ENCODE measurements at regions of chr12 and their contacts with region 1.

Region 1: DNA sequence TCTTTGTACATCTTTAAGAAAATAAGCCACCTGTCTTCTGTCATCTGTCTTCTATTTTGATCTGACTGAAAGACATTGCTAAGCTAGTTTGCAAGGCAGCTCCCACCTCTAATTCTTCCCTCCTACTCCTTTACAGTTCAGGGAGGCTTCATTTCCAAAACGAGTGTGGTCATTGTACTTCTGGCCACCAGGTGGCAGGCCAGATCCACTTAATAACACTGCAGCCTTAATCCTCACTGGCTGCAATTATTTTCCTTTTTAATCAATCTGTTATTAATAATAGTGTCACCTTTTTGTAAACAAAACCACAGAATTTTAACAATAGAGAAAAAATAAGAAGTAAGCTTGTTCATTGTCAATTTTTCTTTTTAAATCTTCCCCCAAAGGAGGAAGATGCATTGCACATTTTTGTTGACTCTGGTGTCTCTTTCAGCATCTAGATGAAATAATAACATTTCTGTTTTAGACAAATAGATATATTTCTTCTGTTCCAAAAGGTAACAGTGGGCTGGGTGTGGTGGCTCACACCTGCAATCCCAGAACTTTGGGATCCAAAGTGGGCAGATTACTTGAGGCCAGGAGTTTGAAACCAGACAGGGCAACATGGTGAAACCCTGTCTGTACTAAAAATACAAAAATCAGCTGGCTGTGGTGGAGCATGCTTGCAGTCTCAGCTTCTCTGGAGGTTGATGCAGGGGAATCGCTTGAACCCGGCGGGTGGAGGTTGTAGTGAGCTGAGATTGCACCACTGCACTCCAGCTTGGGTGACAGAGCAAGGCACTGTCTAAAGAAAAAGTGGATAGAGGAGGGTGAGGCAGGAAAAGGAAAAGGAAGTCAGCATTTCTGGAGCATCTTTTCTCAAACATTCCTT is 23.3 kb downstream of the GABARAPL1 start:
- DNase-seq: peak in 8 of 9 experiments; percentile 26 to 80 (median 54)
- ATAC-seq: peak; percentile 78
- H3K4me3 ChIP-seq: no peak overlapping the region
- H3K4me3 Mint-ChIP-seq: no peak overlapping the region
- H3K27ac ChIP-seq: peak overlapping the region in 1 of 2 experiments; percentile 56
- H3K27ac Mint-ChIP-seq: peak overlapping the region; percentile 73
- H3K4me1 ChIP-seq: peaks cover 6% of the 10 kb centered on the region
- H3K4me1 Mint-ChIP-seq: peaks cover 18% of the 10 kb centered on the region
- H3K27me3 ChIP-seq: no peaks in the 10 kb centered on the region
- H3K27me3 Mint-ChIP-seq: no peaks in the 10 kb centered on the region
- CTCF ChIP-seq: peak; percentile 90

Region 2: GRCh38 chr12:10182354-10183061 is 53.5 kb before region 1 on chr12:
- CTCF ChIA-PET with region 1: no interaction called
- POLR2A ChIA-PET with region 1: no interaction called
- intact Hi-C with region 1: no loop called
- DNase-seq: peak in 1 of 9 experiments; percentile 26
- ATAC-seq: no peak
- H3K4me3 ChIP-seq: no peak overlapping the region
- H3K4me3 Mint-ChIP-seq: no peak overlapping the region
- H3K27ac ChIP-seq: no peak overlapping the region
- H3K27ac Mint-ChIP-seq: no peak overlapping the region
- H3K4me1 ChIP-seq: no peaks in the 10 kb centered on the region
- H3K4me1 Mint-ChIP-seq: no peaks in the 10 kb centered on the region
- H3K27me3 ChIP-seq: peaks cover 3 to 5% of the 10 kb centered on the region in 2 experiments
- H3K27me3 Mint-ChIP-seq: peaks cover 32% of the 10 kb centered on the region
- CTCF ChIP-seq: no peak

Region 3: GRCh38 chr12:10304161-10304574 is 68.2 kb after region 1 on chr12:
- CTCF ChIA-PET with region 1: interaction called, 5 read pairs
- POLR2A ChIA-PET with region 1: no interaction called
- intact Hi-C with region 1: loop called (anchors 5 kb)
- DNase-seq: peak in 4 of 9 experiments; percentile 10 to 83 (median 47)
- ATAC-seq: peak; percentile 52
- H3K4me3 ChIP-seq: no peak overlapping the region
- H3K4me3 Mint-ChIP-seq: no peak overlapping the region
- H3K27ac ChIP-seq: peak overlapping the region in 1 of 2 experiments; percentile 87
- H3K27ac Mint-ChIP-seq: peak overlapping the region; percentile 24
- H3K4me1 ChIP-seq: peaks cover 9% of the 10 kb centered on the region
- H3K4me1 Mint-ChIP-seq: peaks cover 42% of the 10 kb centered on the region
- H3K27me3 ChIP-seq: no peaks in the 10 kb centered on the region
- H3K27me3 Mint-ChIP-seq: no peaks in the 10 kb centered on the region
- CTCF ChIP-seq: no peak

Region 4: GRCh38 chr12:10331642-10332239 is 95.7 kb after region 1 on chr12:
- CTCF ChIA-PET with region 1: interaction called, 9 read pairs
- POLR2A ChIA-PET with region 1: no interaction called
- intact Hi-C with region 1: loop called in 1 of 2 experiments (anchors 2 kb)
- DNase-seq: peak in 3 of 9 experiments; percentile 8 to 77 (median 63)
- ATAC-seq: no peak
- H3K4me3 ChIP-seq: no peak overlapping the region
- H3K4me3 Mint-ChIP-seq: peak overlapping the region; percentile 26
- H3K27ac ChIP-seq: no peak overlapping the region
- H3K27ac Mint-ChIP-seq: no peak overlapping the region
- H3K4me1 ChIP-seq: peaks cover 6% of the 10 kb centered on the region
- H3K4me1 Mint-ChIP-seq: peaks cover 10% of the 10 kb centered on the region
- H3K27me3 ChIP-seq: no peaks in the 10 kb centered on the region
- H3K27me3 Mint-ChIP-seq: no peaks in the 10 kb centered on the region
- CTCF ChIP-seq: peak; percentile 51

Region 5: GRCh38 chr12:10562306-10562933 is 326.4 kb after region 1 on chr12:
- CTCF ChIA-PET with region 1: interaction called, 20 read pairs
- POLR2A ChIA-PET with region 1: no interaction called
- intact Hi-C with region 1: loop called (anchors 1 kb)
- DNase-seq: peak in 4 of 9 experiments; percentile 29 to 79 (median 62)
- ATAC-seq: no peak
- H3K4me3 ChIP-seq: no peak overlapping the region
- H3K4me3 Mint-ChIP-seq: peak overlapping the region; percentile 11
- H3K27ac ChIP-seq: no peak overlapping the region
- H3K27ac Mint-ChIP-seq: peak overlapping the region; percentile 80
- H3K4me1 ChIP-seq: peaks cover 70% of the 10 kb centered on the region
- H3K4me1 Mint-ChIP-seq: peaks cover 83% of the 10 kb centered on the region
- H3K27me3 ChIP-seq: no peaks in the 10 kb centered on the region
- H3K27me3 Mint-ChIP-seq: no peaks in the 10 kb centered on the region
- CTCF ChIP-seq: peak; percentile 98

Region 6: GRCh38 chr12:10668526-10668925 is 432.5 kb after region 1 on chr12:
- CTCF ChIA-PET with region 1: interaction called, 27 read pairs
- POLR2A ChIA-PET with region 1: no interaction called
- intact Hi-C with region 1: no loop called
- DNase-seq: peak in 2 of 9 experiments; percentile 26 to 51
- ATAC-seq: no peak
- H3K4me3 ChIP-seq: peak overlapping the region; percentile 21 to 34
- H3K4me3 Mint-ChIP-seq: peak overlapping the region; percentile 86
- H3K27ac ChIP-seq: no peak overlapping the region
- H3K27ac Mint-ChIP-seq: peak overlapping the region; percentile 84
- H3K4me1 ChIP-seq: peaks cover 25% of the 10 kb centered on the region
- H3K4me1 Mint-ChIP-seq: peaks cover 40% of the 10 kb centered on the region
- H3K27me3 ChIP-seq: no peaks in the 10 kb centered on the region
- H3K27me3 Mint-ChIP-seq: no peaks in the 10 kb centered on the region
- CTCF ChIP-seq: no peak

Region 7: GRCh38 chr12:10740182-10740581 is 504.2 kb after region 1 on chr12:
- CTCF ChIA-PET with region 1: interaction called, 5 read pairs
- POLR2A ChIA-PET with region 1: no interaction called
- intact Hi-C with region 1: loop called in 1 of 2 experiments (anchors 5 kb)
- DNase-seq: no peak
- ATAC-seq: no peak
- H3K4me3 ChIP-seq: no peak overlapping the region
- H3K4me3 Mint-ChIP-seq: no peak overlapping the region
- H3K27ac ChIP-seq: no peak overlapping the region
- H3K27ac Mint-ChIP-seq: no peak overlapping the region
- H3K4me1 ChIP-seq: no peaks in the 10 kb centered on the region
- H3K4me1 Mint-ChIP-seq: no peaks in the 10 kb centered on the region
- H3K27me3 ChIP-seq: no peaks in the 10 kb centered on the region
- H3K27me3 Mint-ChIP-seq: peaks cover 2% of the 10 kb centered on the region
- CTCF ChIP-seq: no peak

Region 8: DNA sequence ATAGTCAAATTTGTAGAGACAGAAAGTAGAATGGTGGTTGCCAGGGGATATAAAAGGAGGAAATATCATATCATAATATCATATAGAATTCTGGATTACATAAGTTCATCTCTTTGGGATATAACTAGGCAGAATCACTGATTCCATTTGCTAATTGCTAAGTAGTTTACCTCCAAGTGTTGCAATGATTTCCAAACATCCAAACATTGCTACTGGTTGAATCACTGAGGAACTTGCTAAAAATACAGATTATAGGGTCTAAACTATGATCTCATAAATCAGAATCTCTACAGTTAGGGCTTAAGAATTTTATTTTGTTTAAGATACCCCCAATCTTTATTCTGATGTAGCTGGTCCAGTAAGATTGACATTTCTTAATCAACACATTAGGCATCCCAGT is 966.8 kb after region 1 on chr12:
- CTCF ChIA-PET with region 1: interaction called, 4 read pairs
- POLR2A ChIA-PET with region 1: no interaction called
- intact Hi-C with region 1: loop called in 1 of 2 experiments (anchors 10 kb)
- DNase-seq: no peak
- ATAC-seq: no peak
- H3K4me3 ChIP-seq: no peak overlapping the region
- H3K4me3 Mint-ChIP-seq: no peak overlapping the region
- H3K27ac ChIP-seq: no peak overlapping the region
- H3K27ac Mint-ChIP-seq: no peak overlapping the region
- H3K4me1 ChIP-seq: no peaks in the 10 kb centered on the region
- H3K4me1 Mint-ChIP-seq: no peaks in the 10 kb centered on the region
- H3K27me3 ChIP-seq: no peaks in the 10 kb centered on the region
- H3K27me3 Mint-ChIP-seq: no peaks in the 10 kb centered on the region
- CTCF ChIP-seq: no peak

Measured in CD8-positive, alpha-beta T cell (primary cell).